Activated CD4-positive, alpha-beta memory T cell treated with anti-CD3 and anti-CD28 coated beads for 36 hours (primary cell): ENCODE measurements at regions of chr10 and their contacts with region 1.

Region 1: GRCh38 chr10:60611291-60611747 is 167.0 kb upstream of the CDK1 start:
- DNase-seq: peak; percentile 51
- H3K4me3 Mint-ChIP-seq: no peak overlapping the region
- H3K27ac Mint-ChIP-seq: peak overlapping the region; percentile 24
- H3K4me1 Mint-ChIP-seq: peaks cover 27% of the 10 kb centered on the region
- H3K27me3 Mint-ChIP-seq: no peaks in the 10 kb centered on the region

Region 2: GRCh38 chr10:60566096-60566495 is 45.2 kb before region 1 on chr10:
- CTCF ChIA-PET with region 1: no interaction called
- POLR2A ChIA-PET with region 1: no interaction called
- intact Hi-C with region 1: loop called (anchors 1 kb)
- DNase-seq: no peak
- H3K4me3 Mint-ChIP-seq: no peak overlapping the region
- H3K27ac Mint-ChIP-seq: peak overlapping the region; percentile 49
- H3K4me1 Mint-ChIP-seq: peaks cover 40% of the 10 kb centered on the region
- H3K27me3 Mint-ChIP-seq: no peaks in the 10 kb centered on the region

Region 3: DNA sequence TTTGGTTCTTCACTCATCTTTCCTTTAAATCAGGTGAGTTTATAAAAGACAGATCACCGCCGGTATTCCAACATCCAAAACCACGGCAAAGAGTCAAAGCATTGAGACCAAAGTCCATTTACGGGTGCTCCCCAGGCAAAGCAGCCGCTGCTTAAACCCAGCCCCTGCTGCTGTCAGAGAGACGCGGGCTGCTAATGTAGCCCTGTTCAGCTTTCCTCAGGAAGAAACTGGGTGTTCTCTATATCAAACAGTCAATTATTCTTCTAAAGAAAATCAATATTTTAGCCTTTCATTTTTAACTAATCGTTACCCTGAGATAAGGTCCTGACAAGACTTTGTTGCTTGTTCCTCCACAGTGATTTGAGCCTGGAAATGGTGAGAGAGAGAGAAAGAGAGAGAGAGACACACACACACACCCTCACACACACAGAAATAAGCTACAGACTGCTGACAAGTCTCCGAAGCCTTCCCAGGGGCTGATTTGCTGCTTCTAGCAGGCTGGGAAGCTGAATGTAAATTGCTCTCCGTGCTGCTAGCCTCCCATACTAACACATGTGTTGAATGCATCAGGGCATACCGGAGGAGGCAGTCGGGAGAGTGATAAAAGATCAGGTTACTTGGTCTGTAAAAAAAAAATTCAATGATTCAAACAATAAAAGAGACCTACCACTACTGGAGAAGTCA is 38.7 kb before region 1 on chr10:
- CTCF ChIA-PET with region 1: interaction called, 3 read pairs
- POLR2A ChIA-PET with region 1: no interaction called
- intact Hi-C with region 1: loop called (anchors 1 kb)
- DNase-seq: peak; percentile 51
- H3K4me3 Mint-ChIP-seq: peak overlapping the region; percentile 83
- H3K27ac Mint-ChIP-seq: peak overlapping the region; percentile 87
- H3K4me1 Mint-ChIP-seq: peaks cover 54% of the 10 kb centered on the region
- H3K27me3 Mint-ChIP-seq: no peaks in the 10 kb centered on the region

Region 4: DNA sequence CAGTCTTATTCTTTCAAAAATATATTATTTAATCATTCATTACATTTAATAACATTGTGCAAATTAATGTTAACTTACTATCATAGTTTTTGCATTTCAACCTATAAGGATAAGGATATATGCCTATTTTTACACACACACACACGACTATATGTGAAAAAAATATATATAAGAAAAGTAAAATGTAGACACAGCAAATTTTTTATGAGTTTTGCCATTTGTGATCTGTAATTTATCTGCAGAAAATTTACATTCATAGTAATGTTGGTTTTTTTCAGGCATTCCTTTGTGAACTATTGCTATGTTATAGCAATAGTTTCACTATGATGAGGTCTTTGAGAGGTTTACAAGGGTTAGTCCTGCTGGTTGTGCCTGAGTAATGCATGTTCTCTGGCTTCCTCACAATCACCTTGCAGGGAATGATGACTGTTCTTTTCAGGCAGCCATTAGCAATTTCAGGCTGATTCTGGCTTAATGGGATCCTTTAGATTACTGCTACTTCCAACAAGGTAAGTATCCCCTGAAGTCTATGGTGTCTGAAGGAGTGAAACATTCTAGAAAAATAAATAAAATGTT is 16.8 kb before region 1 on chr10:
- CTCF ChIA-PET with region 1: interaction called, 3 read pairs
- POLR2A ChIA-PET with region 1: no interaction called
- intact Hi-C with region 1: loop called (anchors 1 kb)
- DNase-seq: no peak
- H3K4me3 Mint-ChIP-seq: no peak overlapping the region
- H3K27ac Mint-ChIP-seq: no peak overlapping the region
- H3K4me1 Mint-ChIP-seq: peaks cover 20% of the 10 kb centered on the region
- H3K27me3 Mint-ChIP-seq: no peaks in the 10 kb centered on the region

Region 5: GRCh38 chr10:60662917-60663614 is 51.7 kb after region 1 on chr10:
- CTCF ChIA-PET with region 1: no interaction called
- POLR2A ChIA-PET with region 1: no interaction called
- intact Hi-C with region 1: loop called (anchors 5 kb)
- DNase-seq: no peak
- H3K4me3 Mint-ChIP-seq: no peak overlapping the region
- H3K27ac Mint-ChIP-seq: no peak overlapping the region
- H3K4me1 Mint-ChIP-seq: peaks cover 45% of the 10 kb centered on the region
- H3K27me3 Mint-ChIP-seq: peaks cover 3% of the 10 kb centered on the region